ENCODE measurements at regions of chr2 and their contacts with region 1.

Region 1: DNA sequence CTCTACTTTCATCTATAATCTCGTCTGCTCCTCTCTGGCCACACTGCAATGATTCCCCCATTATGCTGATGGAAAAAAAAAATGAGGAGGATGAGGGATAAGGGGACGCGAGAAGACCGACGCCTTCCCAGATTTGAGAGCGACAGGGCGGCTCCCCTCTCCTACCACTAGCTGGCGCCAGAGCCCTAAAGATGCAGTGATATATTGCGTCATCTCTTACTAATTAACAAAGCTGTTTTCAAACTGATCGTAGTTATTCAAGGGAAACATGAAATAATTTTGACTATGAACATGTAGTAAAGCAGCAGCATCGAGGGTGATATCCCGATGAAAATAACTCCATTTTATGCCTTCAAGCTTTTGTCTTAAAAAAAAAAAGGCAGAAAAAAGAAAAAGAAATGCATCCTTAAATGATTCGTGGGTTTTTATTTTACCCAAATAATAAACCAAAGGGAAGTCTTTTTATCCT is 48.0 kb upstream of the HNRNPA3 start:
- DNase-seq: peak; percentile 85
- H3K4me3 Mint-ChIP-seq: no peak overlapping the region
- H3K27ac Mint-ChIP-seq: no peak overlapping the region
- H3K4me1 Mint-ChIP-seq: peaks cover 47% of the 10 kb centered on the region
- H3K27me3 Mint-ChIP-seq: no peaks in the 10 kb centered on the region
- CTCF ChIP-seq: peak; percentile 98

Region 2: DNA sequence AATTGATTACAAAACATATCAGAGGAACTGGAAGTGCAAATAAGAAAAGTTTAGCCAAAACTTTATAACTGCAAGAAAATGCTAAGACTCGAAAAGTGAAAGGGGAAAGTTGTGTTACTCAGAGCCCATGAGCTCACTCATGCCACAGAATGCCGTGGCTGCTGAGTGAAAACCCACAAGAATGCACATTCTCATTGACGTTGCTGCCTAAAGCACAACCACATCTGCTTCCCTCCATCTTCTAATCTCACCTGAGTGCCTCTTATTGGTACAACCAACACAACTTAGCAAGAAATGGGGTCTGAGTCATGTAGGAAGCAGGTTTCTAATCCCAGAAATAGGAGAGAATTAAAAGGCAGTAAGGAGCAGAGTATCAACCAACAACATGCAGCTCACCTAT is 1422.3 kb before region 1 on chr2:
- CTCF ChIA-PET with region 1: no interaction called
- intact Hi-C with region 1: no loop called
- DNase-seq: no peak
- H3K4me3 Mint-ChIP-seq: no peak overlapping the region
- H3K27ac Mint-ChIP-seq: no peak overlapping the region
- H3K4me1 Mint-ChIP-seq: no peaks in the 10 kb centered on the region
- H3K27me3 Mint-ChIP-seq: peaks cover 9% of the 10 kb centered on the region
- CTCF ChIP-seq: no peak

Region 3: GRCh38 chr2:176126929-176127773 is 1037.5 kb before region 1 on chr2:
- CTCF ChIA-PET with region 1: no interaction called
- intact Hi-C with region 1: loop called (anchors 5 kb)
- DNase-seq: peak; percentile 60
- H3K4me3 Mint-ChIP-seq: no peak overlapping the region
- H3K27ac Mint-ChIP-seq: no peak overlapping the region
- H3K4me1 Mint-ChIP-seq: no peaks in the 10 kb centered on the region
- H3K27me3 Mint-ChIP-seq: no peaks in the 10 kb centered on the region
- CTCF ChIP-seq: peak; percentile 73

Region 4: DNA sequence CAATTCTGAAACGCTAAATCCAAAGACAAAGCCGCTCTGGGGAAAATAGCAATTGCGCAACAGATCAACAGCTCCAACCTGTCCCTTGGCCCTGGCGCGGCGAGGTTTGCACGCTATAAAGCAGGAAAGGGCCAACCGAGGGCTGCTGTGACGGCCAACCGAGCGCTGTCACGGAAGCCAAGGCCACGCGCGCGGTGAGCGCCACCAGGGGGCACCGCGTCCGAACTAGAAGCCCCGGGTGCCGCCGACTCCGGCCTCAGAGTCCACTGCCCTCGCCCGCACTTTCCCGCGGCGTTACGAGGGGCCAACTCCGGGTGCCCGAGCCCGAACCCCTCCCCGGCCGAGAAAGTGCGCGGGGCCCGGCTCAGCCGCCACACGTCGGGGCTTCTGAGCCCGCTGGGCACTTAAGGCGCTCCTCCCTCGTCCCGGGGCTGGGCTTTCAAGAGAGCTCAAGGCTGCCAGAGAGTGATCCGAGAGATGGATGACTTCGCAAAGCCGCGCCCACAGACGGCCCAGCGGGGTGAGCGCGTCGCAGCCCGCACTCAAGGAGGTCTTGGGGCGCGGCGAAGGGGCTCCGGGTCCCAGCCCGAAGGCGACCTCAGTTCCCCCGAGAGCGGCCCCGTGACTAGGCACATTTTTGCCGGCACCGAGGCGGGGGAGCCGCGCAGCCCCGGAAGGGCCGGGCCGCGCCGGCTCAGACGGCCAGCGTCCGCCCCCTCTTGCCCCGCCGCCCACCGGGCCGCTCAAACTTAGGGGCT is 99.0 kb after region 1 on chr2:
- CTCF ChIA-PET with region 1: interaction called, 42 read pairs
- intact Hi-C with region 1: loop called (anchors 10 kb)
- DNase-seq: peak; percentile 99
- H3K4me3 Mint-ChIP-seq: peak overlapping the region; percentile 82
- H3K27ac Mint-ChIP-seq: peak overlapping the region; percentile 96
- H3K4me1 Mint-ChIP-seq: peaks cover 26% of the 10 kb centered on the region
- H3K27me3 Mint-ChIP-seq: no peaks in the 10 kb centered on the region
- CTCF ChIP-seq: peak; percentile 88

Region 5: GRCh38 chr2:177332041-177332991 is 167.7 kb after region 1 on chr2:
- CTCF ChIA-PET with region 1: interaction called, 10 read pairs
- intact Hi-C with region 1: loop called (anchors 1 kb)
- DNase-seq: peak; percentile 53
- H3K4me3 Mint-ChIP-seq: no peak overlapping the region
- H3K27ac Mint-ChIP-seq: peak overlapping the region; percentile 34
- H3K4me1 Mint-ChIP-seq: peaks cover 27% of the 10 kb centered on the region
- H3K27me3 Mint-ChIP-seq: no peaks in the 10 kb centered on the region
- CTCF ChIP-seq: peak; percentile 63

Region 6: DNA sequence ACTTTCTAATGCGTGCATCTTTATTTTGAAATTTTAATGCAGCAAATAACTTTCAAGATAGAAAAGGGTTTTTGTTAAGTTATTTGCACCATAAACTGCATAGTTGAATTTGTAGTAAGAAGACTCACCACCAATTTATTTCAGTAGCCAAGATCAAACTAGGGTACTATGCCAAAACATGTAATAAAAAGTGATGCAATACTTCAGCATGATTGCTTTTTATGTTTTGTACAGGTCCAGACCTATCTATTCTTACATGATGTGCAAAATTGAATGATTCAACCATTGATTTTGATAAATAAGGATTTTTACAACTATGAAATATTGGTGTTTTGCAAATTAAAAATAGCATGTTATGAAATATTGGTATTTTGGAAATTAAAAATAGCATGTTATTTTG is 254.7 kb after region 1 on chr2:
- CTCF ChIA-PET with region 1: interaction called, 3 read pairs
- intact Hi-C with region 1: loop called (anchors 5 kb)
- DNase-seq: no peak
- H3K4me3 Mint-ChIP-seq: no peak overlapping the region
- H3K27ac Mint-ChIP-seq: peak overlapping the region; percentile 55
- H3K4me1 Mint-ChIP-seq: peaks cover 40% of the 10 kb centered on the region
- H3K27me3 Mint-ChIP-seq: no peaks in the 10 kb centered on the region
- CTCF ChIP-seq: no peak

Region 7: DNA sequence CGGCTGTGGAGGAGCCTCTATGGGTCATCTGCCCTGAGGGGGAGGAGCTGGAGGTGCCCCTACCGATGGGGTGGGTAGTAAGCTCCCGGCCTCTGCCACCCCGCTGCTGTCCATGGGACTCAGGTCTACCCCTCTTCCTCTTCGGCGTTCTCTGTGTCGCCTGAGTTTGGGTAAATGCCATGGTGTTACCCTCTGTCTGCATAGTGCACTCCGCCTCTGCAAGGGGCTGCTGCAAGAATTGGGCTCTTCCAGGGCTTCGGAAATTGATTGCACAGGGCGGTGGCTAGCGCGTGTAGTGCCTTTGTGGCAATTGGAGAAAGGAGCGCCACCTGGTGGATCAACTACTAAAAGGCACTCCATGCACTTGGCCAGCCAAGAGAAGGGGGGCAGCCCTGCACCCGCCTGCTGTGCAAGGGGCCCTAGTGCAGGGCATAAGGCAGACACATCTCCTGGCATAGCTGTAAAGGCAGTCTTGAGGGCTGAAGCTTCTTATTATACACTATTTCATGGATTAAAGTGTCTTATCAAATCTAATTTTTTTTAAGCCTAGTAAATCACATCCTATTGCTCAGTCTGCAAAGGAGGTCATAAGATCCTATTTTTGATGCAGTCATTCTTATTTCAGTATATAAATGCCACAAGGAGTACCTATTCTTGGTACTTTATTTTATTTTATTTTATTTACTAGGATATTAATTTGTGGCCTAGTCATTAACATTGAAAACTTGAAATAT is 599.1 kb after region 1 on chr2:
- CTCF ChIA-PET with region 1: no interaction called
- intact Hi-C with region 1: loop called (anchors 10 kb)
- DNase-seq: peak; percentile 82
- H3K4me3 Mint-ChIP-seq: no peak overlapping the region
- H3K27ac Mint-ChIP-seq: no peak overlapping the region
- H3K4me1 Mint-ChIP-seq: peaks cover 3% of the 10 kb centered on the region
- H3K27me3 Mint-ChIP-seq: peaks cover 18% of the 10 kb centered on the region
- CTCF ChIP-seq: peak; percentile 89

Measured in Calu3 (cell line).